Breast epithelium (tissue), 4 donors: ENCODE measurements at regions of chr2 and their contacts with region 1.

Region 1: GRCh38 chr2:240232961-240233893 is 92.8 kb upstream of the OTOS start:
- DNase-seq: peak; percentile 89 to 90
- H3K4me3 ChIP-seq: peak overlapping the region in 2 of 3 donors; percentile 49 to 69
- H3K27ac ChIP-seq: peak overlapping the region in 1 of 2 donors; percentile 55
- H3K4me1 ChIP-seq: peaks cover 0 to 3% of the 10 kb centered on the region in 2 donors
- H3K27me3 ChIP-seq: no peaks in the 10 kb centered on the region
- CTCF ChIP-seq: peak; percentile 56 to 90 (median 84)
- POLR2A ChIP-seq: no peak

Region 2: GRCh38 chr2:240434728-240435456 is 201.7 kb after region 1 on chr2:
- intact Hi-C with region 1: loop called (anchors 5 kb)
- DNase-seq: peak; percentile 83 to 89
- H3K4me3 ChIP-seq: peak overlapping the region; percentile 67 to 90 (median 73)
- H3K27ac ChIP-seq: peak overlapping the region; percentile 88 to 91
- H3K4me1 ChIP-seq: peaks cover 13 to 16% of the 10 kb centered on the region in 2 donors
- H3K27me3 ChIP-seq: no peaks in the 10 kb centered on the region
- CTCF ChIP-seq: no peak
- POLR2A ChIP-seq: no peak